Activated naive CD4-positive, alpha-beta T cell treated with anti-CD3 and anti-CD28 coated beads for 36 hours (primary cell): ENCODE measurements at regions of chr20 and their contacts with region 1.

Region 1: GRCh38 chr20:44080646-44081267 is 106.2 kb downstream of the JPH2 start:
- DNase-seq: peak; percentile 88
- H3K4me3 Mint-ChIP-seq: no peak overlapping the region
- H3K27ac Mint-ChIP-seq: no peak overlapping the region
- H3K4me1 Mint-ChIP-seq: peaks cover 13% of the 10 kb centered on the region
- H3K27me3 Mint-ChIP-seq: no peaks in the 10 kb centered on the region

Region 2: GRCh38 chr20:43537921-43538877 is 542.6 kb before region 1 on chr20:
- CTCF ChIA-PET with region 1: interaction called, 6 read pairs
- intact Hi-C with region 1: loop called (anchors 1 kb)
- DNase-seq: peak; percentile 71
- H3K4me3 Mint-ChIP-seq: no peak overlapping the region
- H3K27ac Mint-ChIP-seq: no peak overlapping the region
- H3K4me1 Mint-ChIP-seq: no peaks in the 10 kb centered on the region
- H3K27me3 Mint-ChIP-seq: no peaks in the 10 kb centered on the region

Region 3: DNA sequence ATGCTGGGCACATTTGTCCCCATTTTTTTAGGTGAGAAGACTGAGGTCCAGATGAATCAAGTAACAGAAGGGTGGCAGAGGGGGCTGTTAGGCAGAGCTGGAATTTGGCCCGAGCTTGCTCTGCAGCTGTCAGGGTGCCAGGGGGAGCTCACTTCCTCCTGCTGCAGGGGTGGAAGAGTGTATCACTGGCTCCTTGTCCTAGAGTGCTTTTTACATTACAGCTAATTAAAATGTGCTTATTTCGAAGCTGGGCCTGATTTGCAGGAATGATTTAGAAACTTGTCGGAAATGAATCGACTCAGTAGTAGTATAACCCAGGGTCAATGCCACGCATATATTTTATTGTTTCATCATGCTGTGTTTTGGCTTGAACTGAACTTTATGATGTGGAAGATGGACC is 155.0 kb before region 1 on chr20:
- CTCF ChIA-PET with region 1: interaction called, 4 read pairs
- intact Hi-C with region 1: loop called (anchors 1 kb)
- DNase-seq: peak; percentile 60
- H3K4me3 Mint-ChIP-seq: no peak overlapping the region
- H3K27ac Mint-ChIP-seq: no peak overlapping the region
- H3K4me1 Mint-ChIP-seq: peaks cover 43% of the 10 kb centered on the region
- H3K27me3 Mint-ChIP-seq: peaks cover 9% of the 10 kb centered on the region

Region 4: GRCh38 chr20:44056010-44056698 is 24.6 kb before region 1 on chr20:
- CTCF ChIA-PET with region 1: interaction called, 27 read pairs
- intact Hi-C with region 1: loop called (anchors 1 kb)
- DNase-seq: peak; percentile 70
- H3K4me3 Mint-ChIP-seq: no peak overlapping the region
- H3K27ac Mint-ChIP-seq: no peak overlapping the region
- H3K4me1 Mint-ChIP-seq: peaks cover 19% of the 10 kb centered on the region
- H3K27me3 Mint-ChIP-seq: no peaks in the 10 kb centered on the region